Motor neuron (in vitro differentiated cells): ENCODE measurements at regions of chr17 and their contacts with region 1.

Region 1: DNA sequence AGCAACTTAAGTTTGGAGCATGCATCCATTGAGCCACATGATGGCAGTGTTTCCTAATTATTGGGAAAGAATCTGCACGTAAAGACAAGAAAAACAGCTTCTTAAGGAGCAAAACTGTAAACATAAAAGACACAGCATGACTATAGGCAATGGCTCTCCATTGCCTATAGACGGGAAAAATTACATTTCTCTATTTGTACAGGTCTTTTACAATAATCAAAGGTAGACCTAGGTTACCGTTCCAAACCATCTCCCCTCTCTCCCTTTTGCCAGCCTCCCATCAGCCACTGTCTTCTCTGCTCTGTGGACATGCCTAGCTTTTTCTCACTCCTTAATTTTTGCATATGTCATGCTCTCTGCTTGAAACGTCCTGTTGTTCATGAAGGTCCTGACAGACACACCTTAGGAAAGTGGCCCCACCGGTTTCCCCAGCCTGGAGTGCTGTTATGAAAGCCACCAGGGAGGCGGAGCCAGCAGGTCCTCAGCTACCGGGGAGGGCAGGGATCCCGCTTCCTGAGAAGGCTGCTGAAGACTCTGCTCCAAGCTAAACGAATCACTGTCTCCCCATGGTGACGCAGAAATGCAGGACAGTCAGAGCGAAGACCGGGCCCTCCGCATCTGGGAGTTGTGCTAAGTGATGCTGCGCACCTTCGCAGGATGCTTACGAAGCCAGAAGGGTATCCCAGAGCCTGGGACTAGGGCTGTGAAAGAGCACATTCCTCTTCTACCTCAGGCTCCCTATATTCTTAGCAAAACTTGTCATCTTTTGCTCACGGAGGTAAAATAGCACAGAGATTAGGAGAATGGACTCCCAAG is 2.2 kb upstream of the SLC16A11 start:
- ATAC-seq: peak; percentile 6 to 61 (median 43)
- H3K4me3 ChIP-seq: peak overlapping the region in 3 of 5 donors; percentile 0 to 4 (median 2)
- H3K27ac ChIP-seq: no peak overlapping the region
- H3K4me1 ChIP-seq: peaks cover 13 to 42% of the 10 kb centered on the region in 2 donors

Region 2: GRCh38 chr17:7136266-7136877 is 90.3 kb after region 1 on chr17:
- in situ Hi-C with region 1: loop called in 4 of 9 experiments (anchors 5 to 25 kb)
- ATAC-seq: peak in 3 of 8 experiments; percentile 23 to 59 (median 29)
- H3K4me3 ChIP-seq: no peak overlapping the region
- H3K27ac ChIP-seq: no peak overlapping the region
- H3K4me1 ChIP-seq: peaks cover 0 to 6% of the 10 kb centered on the region in 2 donors